B cell (primary cell): ENCODE measurements at regions of chr12 and their contacts with region 1.

Region 1: GRCh38 chr12:132956011-132956788 is at the start of gene ZNF605:
- DNase-seq: peak; percentile 93
- ATAC-seq: peak; percentile 91
- H3K4me3 ChIP-seq: peak within 1 kb of the TSS; percentile 69 to 95 (median 87)
- H3K4me3 Mint-ChIP-seq: peak within 1 kb of the TSS; percentile 93
- H3K27ac ChIP-seq: peak within 1 kb of the TSS; percentile 65 to 93
- H3K27ac Mint-ChIP-seq: peak within 1 kb of the TSS; percentile 93
- H3K4me1 ChIP-seq: peaks cover 11 to 19% of the 10 kb centered on the region in 2 donors
- H3K4me1 Mint-ChIP-seq: peaks cover 26% of the 10 kb centered on the region
- H3K27me3 ChIP-seq: no peaks in the 10 kb centered on the region
- H3K27me3 Mint-ChIP-seq: no peaks in the 10 kb centered on the region
- CTCF ChIP-seq: no peak
- total RNA-seq, gene ZNF605: 19.7 and 21.7 TPM in 2 replicates

Region 2: GRCh38 chr12:132144115-132144812 is 811.9 kb before region 1 on chr12 and contains the starts of genes DDX51 and NOC4L:
- CTCF ChIA-PET with region 1: no interaction called
- POLR2A ChIA-PET with region 1: no interaction called
- intact Hi-C with region 1: loop called (anchors 5 kb)
- DNase-seq: peak; percentile 98
- ATAC-seq: peak; percentile 94
- H3K4me3 ChIP-seq: peak within 1 kb of the TSS; percentile 16 to 90 (median 69)
- H3K4me3 Mint-ChIP-seq: peak within 1 kb of the TSS; percentile 96
- H3K27ac ChIP-seq: peak within 1 kb of the TSS; percentile 47 to 95
- H3K27ac Mint-ChIP-seq: peak within 1 kb of the TSS; percentile 99
- H3K4me1 ChIP-seq: peaks cover 15 to 21% of the 10 kb centered on the region in 2 donors
- H3K4me1 Mint-ChIP-seq: peaks cover 27% of the 10 kb centered on the region
- H3K27me3 ChIP-seq: no peaks in the 10 kb centered on the region
- H3K27me3 Mint-ChIP-seq: no peaks in the 10 kb centered on the region
- CTCF ChIP-seq: no peak
- total RNA-seq, gene DDX51: 46.3 and 51.3 TPM in 2 replicates
- total RNA-seq, gene NOC4L: 21.9 and 23.3 TPM in 2 replicates

Region 3: DNA sequence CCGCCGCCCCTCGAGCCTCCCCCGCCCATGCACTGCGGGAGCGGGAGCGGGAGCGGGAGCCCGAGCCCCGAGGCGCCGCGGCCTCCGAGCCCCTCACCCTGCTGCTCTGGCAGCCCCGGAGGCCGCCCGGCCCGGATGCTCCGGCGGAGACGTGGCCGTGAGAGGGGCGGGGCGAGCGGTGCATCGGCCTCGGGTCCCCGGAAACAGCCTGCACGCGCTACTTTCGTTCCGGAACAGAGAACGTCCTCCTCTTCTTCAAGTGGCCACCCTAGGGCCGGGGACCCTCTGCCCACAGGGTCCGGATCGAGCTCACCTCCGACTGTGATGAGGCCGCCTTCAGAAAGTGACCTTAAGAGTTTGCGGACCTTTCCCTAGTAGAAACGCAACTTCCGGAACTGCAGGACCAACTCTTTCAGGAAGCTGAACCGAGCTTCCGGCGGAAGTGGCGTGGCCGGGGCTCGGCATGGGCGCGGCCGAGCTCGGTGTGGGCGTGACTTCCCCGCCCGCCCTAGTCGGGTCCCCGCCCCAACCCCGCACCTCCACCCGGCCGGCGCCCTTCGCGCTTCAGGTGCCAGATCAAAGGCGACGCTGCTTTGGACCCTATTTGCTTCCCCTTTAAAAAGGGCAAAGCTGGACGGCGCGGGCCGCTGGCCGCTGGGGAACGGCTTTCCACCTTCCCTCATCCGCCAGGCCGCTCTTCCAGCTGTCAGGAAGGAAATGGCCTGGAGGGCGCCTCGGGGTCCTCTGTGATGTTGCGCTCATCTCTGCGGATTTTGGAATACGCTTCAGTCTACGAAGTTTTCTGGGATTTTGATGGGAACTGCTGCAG is 127.3 kb before region 1 on chr12 and contains the start of gene GOLGA3:
- CTCF ChIA-PET with region 1: no interaction called
- POLR2A ChIA-PET with region 1: interaction called, 9 read pairs
- intact Hi-C with region 1: loop called (anchors 2 kb)
- DNase-seq: peak; percentile 97
- ATAC-seq: peak; percentile 94
- H3K4me3 ChIP-seq: peak within 1 kb of the TSS; percentile 81 to 90 (median 85)
- H3K4me3 Mint-ChIP-seq: peak within 1 kb of the TSS; percentile 96
- H3K27ac ChIP-seq: peak within 1 kb of the TSS; percentile 99
- H3K27ac Mint-ChIP-seq: peak within 1 kb of the TSS; percentile 100
- H3K4me1 ChIP-seq: peaks cover 27 to 29% of the 10 kb centered on the region in 2 donors
- H3K4me1 Mint-ChIP-seq: peaks cover 42% of the 10 kb centered on the region
- H3K27me3 ChIP-seq: no peaks in the 10 kb centered on the region
- H3K27me3 Mint-ChIP-seq: no peaks in the 10 kb centered on the region
- CTCF ChIP-seq: no peak
- total RNA-seq, gene GOLGA3: 66.0 and 68.9 TPM in 2 replicates

Region 4: GRCh38 chr12:132925597-132926416 is 30.4 kb before region 1 on chr12:
- CTCF ChIA-PET with region 1: no interaction called
- POLR2A ChIA-PET with region 1: no interaction called
- intact Hi-C with region 1: no loop called
- DNase-seq: no peak
- ATAC-seq: no peak
- H3K4me3 ChIP-seq: peak overlapping the region in 1 of 5 experiments; percentile 22
- H3K4me3 Mint-ChIP-seq: no peak overlapping the region
- H3K27ac ChIP-seq: no peak overlapping the region
- H3K27ac Mint-ChIP-seq: no peak overlapping the region
- H3K4me1 ChIP-seq: no peaks in the 10 kb centered on the region
- H3K4me1 Mint-ChIP-seq: no peaks in the 10 kb centered on the region
- H3K27me3 ChIP-seq: no peaks in the 10 kb centered on the region
- H3K27me3 Mint-ChIP-seq: no peaks in the 10 kb centered on the region
- CTCF ChIP-seq: no peak

Region 5: DNA sequence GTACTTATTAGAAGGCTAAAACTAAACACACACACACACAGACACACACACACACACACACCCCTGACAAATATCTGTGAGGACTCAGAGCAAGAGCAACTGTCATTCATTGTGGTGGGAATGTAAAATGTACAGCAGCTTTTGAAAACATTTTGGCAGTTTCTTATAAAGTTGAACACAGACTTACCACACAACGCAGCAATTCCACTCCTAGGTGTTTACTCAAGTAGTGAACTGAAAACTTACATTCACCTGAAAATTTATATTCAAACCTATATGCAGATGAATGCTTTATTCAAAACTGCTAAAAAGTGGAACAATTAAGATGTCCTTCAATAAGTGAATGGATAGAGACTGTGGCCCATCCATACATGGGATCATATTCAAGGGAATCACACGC is 18.7 kb before region 1 on chr12:
- CTCF ChIA-PET with region 1: no interaction called
- POLR2A ChIA-PET with region 1: no interaction called
- intact Hi-C with region 1: no loop called
- DNase-seq: no peak
- ATAC-seq: no peak
- H3K4me3 ChIP-seq: no peak overlapping the region
- H3K4me3 Mint-ChIP-seq: no peak overlapping the region
- H3K27ac ChIP-seq: no peak overlapping the region
- H3K27ac Mint-ChIP-seq: no peak overlapping the region
- H3K4me1 ChIP-seq: no peaks in the 10 kb centered on the region
- H3K4me1 Mint-ChIP-seq: no peaks in the 10 kb centered on the region
- H3K27me3 ChIP-seq: no peaks in the 10 kb centered on the region
- H3K27me3 Mint-ChIP-seq: no peaks in the 10 kb centered on the region
- CTCF ChIP-seq: no peak

Region 6: GRCh38 chr12:132986001-132986912 is 30.1 kb after region 1 on chr12 and contains the start of gene ZNF26:
- CTCF ChIA-PET with region 1: interaction called, 4 read pairs
- POLR2A ChIA-PET with region 1: interaction called, 5 read pairs
- intact Hi-C with region 1: loop called (anchors 1 kb)
- DNase-seq: peak; percentile 94
- ATAC-seq: peak; percentile 92
- H3K4me3 ChIP-seq: peak within 1 kb of the TSS; percentile 72 to 95 (median 89)
- H3K4me3 Mint-ChIP-seq: peak within 1 kb of the TSS; percentile 95
- H3K27ac ChIP-seq: peak within 1 kb of the TSS; percentile 75 to 83
- H3K27ac Mint-ChIP-seq: peak within 1 kb of the TSS; percentile 96
- H3K4me1 ChIP-seq: peaks cover 14 to 22% of the 10 kb centered on the region in 2 donors
- H3K4me1 Mint-ChIP-seq: peaks cover 27% of the 10 kb centered on the region
- H3K27me3 ChIP-seq: no peaks in the 10 kb centered on the region
- H3K27me3 Mint-ChIP-seq: no peaks in the 10 kb centered on the region
- CTCF ChIP-seq: no peak
- total RNA-seq, gene ZNF26: 36.0 and 41.5 TPM in 2 replicates

Region 7: DNA sequence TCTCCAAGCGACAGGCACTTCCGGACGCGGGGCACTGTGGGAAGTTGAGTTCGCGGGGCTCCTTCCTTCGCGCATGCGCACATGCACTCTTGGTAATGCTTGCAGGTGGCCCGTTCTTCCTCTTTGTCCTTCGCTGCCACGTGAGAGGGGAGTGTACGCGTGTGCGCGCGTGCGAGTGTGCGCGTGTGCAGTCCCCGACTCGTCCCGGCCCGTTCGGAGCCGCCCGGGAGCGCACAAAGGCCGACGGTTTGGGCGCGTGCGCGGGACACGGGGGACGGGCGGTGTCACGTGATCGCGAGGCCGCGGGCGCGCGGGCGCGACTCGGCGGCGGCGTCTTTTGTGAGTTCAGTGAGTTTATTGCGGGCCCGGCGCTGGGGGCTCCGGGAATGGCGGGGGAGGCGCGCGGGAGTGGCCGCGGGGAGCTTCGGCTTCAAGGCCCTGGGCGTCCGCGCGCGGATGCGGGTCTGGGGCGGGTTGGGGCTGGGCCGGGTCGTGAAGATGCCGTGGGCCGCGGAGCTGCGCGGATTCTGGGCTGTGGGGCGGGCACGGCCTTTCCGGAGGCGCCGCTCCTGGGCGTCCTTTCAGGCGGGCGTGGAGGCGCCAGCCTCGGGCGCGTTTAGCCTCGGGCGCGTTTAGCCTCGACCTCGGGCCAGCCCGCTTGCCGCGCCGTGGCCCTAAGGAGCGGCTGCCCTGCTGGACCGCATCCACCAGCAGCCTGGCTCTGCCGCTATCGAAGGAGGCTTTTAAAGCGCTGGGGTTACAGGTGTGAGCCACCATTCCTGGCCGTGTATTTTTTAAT is 81.2 kb after region 1 on chr12 and contains the start of gene ZNF84:
- CTCF ChIA-PET with region 1: no interaction called
- POLR2A ChIA-PET with region 1: no interaction called
- intact Hi-C with region 1: loop called (anchors 1 kb)
- DNase-seq: peak; percentile 99
- ATAC-seq: peak; percentile 95
- H3K4me3 ChIP-seq: peak within 1 kb of the TSS; percentile 51 to 82 (median 69)
- H3K4me3 Mint-ChIP-seq: peak within 1 kb of the TSS; percentile 97
- H3K27ac ChIP-seq: peak within 1 kb of the TSS; percentile 88 to 95
- H3K27ac Mint-ChIP-seq: peak within 1 kb of the TSS; percentile 99
- H3K4me1 ChIP-seq: peaks cover 7 to 10% of the 10 kb centered on the region in 2 donors
- H3K4me1 Mint-ChIP-seq: peaks cover 13% of the 10 kb centered on the region
- H3K27me3 ChIP-seq: no peaks in the 10 kb centered on the region
- H3K27me3 Mint-ChIP-seq: peaks cover 3% of the 10 kb centered on the region
- CTCF ChIP-seq: no peak
- total RNA-seq, gene ZNF84: 48.4 and 61.5 TPM in 2 replicates

Region 8: DNA sequence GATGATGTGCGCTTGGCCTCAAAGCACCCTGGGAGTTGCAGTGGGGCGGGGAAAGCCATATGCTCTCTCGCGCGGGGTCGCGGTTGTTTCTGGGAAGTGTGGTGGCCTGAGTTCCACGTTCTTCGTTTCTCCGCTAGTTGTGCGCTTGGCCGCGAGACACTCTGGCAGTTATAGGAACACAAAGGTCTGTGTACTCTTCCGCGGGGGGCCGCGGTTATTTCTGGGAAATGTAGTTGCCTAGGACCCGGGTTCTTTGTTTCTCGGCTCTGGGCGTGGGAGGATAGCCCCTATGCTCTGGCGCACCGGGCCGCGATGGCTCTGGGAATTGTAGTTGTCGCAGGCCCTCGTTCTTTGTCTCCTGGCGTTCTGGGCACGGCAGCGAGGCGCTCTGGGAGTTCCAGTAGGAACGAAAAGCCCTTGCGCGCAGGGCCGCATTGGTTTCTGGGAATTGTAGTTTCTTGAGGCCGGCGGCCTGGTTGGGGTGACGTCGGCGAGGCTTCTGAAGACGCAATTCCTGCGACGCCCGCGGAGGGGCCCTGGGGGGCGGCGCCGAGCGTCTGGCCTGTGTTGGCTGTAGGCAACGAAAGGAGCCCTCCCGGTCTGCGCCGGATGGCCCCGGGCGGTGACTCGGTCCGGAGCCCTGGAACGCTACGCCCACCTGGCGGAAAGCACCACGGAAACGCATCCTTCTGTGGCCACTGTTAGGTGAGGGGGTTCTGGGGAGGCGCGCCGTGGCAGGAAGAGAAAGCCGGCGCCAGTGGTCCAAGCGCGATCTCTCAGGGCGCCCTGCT is 124.4 kb after region 1 on chr12 and contains the start of gene ZNF140:
- CTCF ChIA-PET with region 1: no interaction called
- POLR2A ChIA-PET with region 1: no interaction called
- intact Hi-C with region 1: loop called (anchors 1 kb)
- DNase-seq: peak; percentile 99
- ATAC-seq: peak; percentile 63
- H3K4me3 ChIP-seq: peak within 1 kb of the TSS; percentile 63 to 95 (median 84)
- H3K4me3 Mint-ChIP-seq: no peak within 1 kb of the TSS
- H3K27ac ChIP-seq: peak within 1 kb of the TSS; percentile 99
- H3K27ac Mint-ChIP-seq: peak within 1 kb of the TSS; percentile 26
- H3K4me1 ChIP-seq: peaks cover 12 to 15% of the 10 kb centered on the region in 2 donors
- H3K4me1 Mint-ChIP-seq: peaks cover 8% of the 10 kb centered on the region
- H3K27me3 ChIP-seq: no peaks in the 10 kb centered on the region
- H3K27me3 Mint-ChIP-seq: no peaks in the 10 kb centered on the region
- CTCF ChIP-seq: peak; percentile 47
- total RNA-seq, gene ZNF140: 24.2 and 26.8 TPM in 2 replicates